ENCODE measurements at regions of chr5 and their contacts with region 1.

Region 1: DNA sequence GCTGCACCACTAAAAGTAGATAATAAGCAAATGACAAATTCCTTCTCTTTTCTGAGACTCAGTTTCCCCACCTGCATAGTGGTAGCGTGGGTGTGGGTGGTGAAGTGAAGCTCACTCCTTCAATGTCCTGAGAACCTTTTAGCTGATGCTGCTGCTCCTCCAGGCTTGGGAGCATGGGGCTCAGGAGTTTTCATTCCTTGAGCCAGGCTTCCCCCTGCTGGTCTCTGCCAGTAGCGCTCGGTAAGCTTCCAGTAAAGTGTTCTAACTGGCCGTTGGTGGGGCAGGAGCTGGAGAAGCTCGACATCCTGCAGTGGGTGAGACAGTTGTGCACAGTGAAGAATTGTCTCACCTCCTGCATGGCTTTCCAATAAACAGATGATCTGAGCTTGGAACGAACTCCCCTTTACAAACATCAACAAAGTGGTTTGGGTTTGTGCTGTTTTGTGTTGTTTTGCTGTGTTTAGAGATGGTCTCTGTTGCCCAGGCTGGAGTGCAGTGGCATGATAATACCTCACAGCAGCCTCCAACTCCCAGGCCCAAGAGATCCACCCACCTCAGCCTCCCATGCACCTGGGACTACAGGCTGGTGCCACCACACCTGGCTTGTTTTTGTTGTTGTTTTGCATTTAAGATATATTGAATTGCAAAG is 34.6 kb downstream of the SPARC start:
- DNase-seq: peak; percentile 81
- ATAC-seq: peak; percentile 99
- H3K4me3 Mint-ChIP-seq: no peak overlapping the region
- H3K27ac Mint-ChIP-seq: no peak overlapping the region
- H3K4me1 Mint-ChIP-seq: no peaks in the 10 kb centered on the region
- H3K27me3 Mint-ChIP-seq: no peaks in the 10 kb centered on the region
- CTCF ChIP-seq: peak; percentile 66

Region 2: DNA sequence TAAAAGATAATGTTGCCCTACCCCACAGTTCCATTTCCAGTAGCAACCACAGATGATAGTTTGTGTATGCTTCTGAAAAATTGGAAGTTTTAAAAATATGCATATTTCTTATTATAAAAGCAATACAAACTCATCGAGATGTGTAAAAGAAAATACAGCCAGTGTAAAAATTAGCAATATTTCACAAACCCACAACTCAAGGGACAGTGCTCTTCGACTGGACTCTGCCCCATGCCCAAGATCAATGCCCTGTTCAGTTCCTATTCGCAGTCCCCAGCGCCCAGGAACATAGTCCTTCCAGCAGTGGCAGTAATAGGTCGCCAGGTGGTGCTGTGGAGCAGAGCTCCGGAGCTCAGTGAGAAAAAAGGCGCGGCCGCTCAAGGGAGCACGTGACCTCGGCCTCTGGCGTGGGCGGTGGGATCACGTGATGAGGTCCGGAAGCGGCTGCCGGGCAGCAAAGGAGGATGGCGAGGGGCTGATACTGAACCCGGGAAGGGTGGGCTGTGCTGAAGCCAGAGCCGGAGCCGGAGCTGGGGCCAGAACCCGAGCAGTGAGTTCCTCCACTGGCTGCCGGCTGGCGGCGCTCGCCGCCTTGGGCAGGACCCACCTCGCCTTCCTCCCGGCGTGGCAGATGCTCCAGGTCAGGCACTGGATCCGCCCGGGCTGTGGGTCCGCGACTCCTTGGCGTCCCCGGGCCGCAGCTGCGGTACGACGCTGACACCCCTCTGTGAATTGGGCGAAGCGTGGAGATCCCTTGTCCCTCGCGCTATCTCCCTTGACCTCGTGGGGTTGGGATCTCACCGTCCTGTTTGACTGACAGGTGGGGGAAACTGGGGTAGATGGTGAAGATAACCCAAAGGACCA is 204.7 kb before region 1 on chr5 and contains the start of gene SLC36A1:
- CTCF ChIA-PET with region 1: interaction called, 34 read pairs
- POLR2A ChIA-PET with region 1: interaction called, 3 read pairs
- intact Hi-C with region 1: loop called (anchors 5 kb)
- DNase-seq: peak; percentile 98
- ATAC-seq: peak; percentile 98
- H3K4me3 Mint-ChIP-seq: peak within 1 kb of the TSS; percentile 93
- H3K27ac Mint-ChIP-seq: peak within 1 kb of the TSS; percentile 87
- H3K4me1 Mint-ChIP-seq: peaks cover 26% of the 10 kb centered on the region
- H3K27me3 Mint-ChIP-seq: peaks cover 10% of the 10 kb centered on the region
- CTCF ChIP-seq: peak; percentile 90
- total RNA-seq, gene SLC36A1: 3.5 to 3.7 TPM

Region 3: DNA sequence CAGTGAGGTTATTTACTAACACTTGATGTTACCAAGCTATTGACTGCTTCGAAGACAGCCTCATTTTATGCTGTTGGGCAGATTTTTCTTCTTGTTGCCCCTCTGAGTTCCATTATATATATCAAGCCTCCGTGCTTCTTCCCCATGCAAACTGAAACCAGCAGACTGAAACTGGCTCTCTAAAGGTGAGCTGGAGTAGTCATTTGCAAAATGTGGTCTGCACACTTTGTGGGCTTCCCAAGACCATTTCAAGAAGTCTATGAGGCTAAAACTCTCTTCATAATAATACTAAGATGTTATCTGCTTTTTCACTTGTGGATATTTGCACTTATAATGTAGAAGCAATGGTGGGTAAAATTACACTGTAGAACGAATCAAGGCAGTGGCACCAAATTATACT is 190.8 kb before region 1 on chr5:
- CTCF ChIA-PET with region 1: interaction called, 11 read pairs
- POLR2A ChIA-PET with region 1: no interaction called
- intact Hi-C with region 1: no loop called
- DNase-seq: no peak
- ATAC-seq: no peak
- H3K4me3 Mint-ChIP-seq: no peak overlapping the region
- H3K27ac Mint-ChIP-seq: no peak overlapping the region
- H3K4me1 Mint-ChIP-seq: no peaks in the 10 kb centered on the region
- H3K27me3 Mint-ChIP-seq: no peaks in the 10 kb centered on the region
- CTCF ChIP-seq: no peak

Region 4: DNA sequence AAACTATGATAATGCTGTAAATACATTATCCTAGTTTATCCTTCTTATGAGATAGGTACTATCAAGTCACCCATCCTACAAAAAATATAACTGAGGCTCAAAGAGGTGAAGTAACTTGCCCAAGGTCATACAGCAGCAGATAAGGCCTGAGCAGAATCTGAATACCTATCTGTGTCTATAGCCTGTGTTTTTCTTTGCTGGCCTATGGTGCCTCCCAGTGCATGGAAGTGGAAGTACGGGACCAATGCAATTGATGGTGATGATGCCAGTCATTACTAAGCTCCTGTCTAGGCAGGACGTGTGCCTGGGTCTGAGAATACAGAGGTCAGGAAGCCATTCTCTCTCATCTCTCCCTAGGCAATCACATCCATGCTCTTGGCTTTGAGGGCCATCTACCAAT is 128.8 kb before region 1 on chr5:
- CTCF ChIA-PET with region 1: interaction called, 17 read pairs
- POLR2A ChIA-PET with region 1: no interaction called
- intact Hi-C with region 1: loop called (anchors 10 kb)
- DNase-seq: peak; percentile 64
- ATAC-seq: peak; percentile 96
- H3K4me3 Mint-ChIP-seq: no peak overlapping the region
- H3K27ac Mint-ChIP-seq: no peak overlapping the region
- H3K4me1 Mint-ChIP-seq: no peaks in the 10 kb centered on the region
- H3K27me3 Mint-ChIP-seq: no peaks in the 10 kb centered on the region
- CTCF ChIP-seq: peak; percentile 62

Region 5: GRCh38 chr5:151637676-151638075 is 14.4 kb before region 1 on chr5:
- CTCF ChIA-PET with region 1: interaction called, 14 read pairs
- POLR2A ChIA-PET with region 1: no interaction called
- intact Hi-C with region 1: no loop called
- DNase-seq: no peak
- ATAC-seq: no peak
- H3K4me3 Mint-ChIP-seq: no peak overlapping the region
- H3K27ac Mint-ChIP-seq: no peak overlapping the region
- H3K4me1 Mint-ChIP-seq: peaks cover 2% of the 10 kb centered on the region
- H3K27me3 Mint-ChIP-seq: peaks cover 2% of the 10 kb centered on the region
- CTCF ChIP-seq: no peak

Region 6: DNA sequence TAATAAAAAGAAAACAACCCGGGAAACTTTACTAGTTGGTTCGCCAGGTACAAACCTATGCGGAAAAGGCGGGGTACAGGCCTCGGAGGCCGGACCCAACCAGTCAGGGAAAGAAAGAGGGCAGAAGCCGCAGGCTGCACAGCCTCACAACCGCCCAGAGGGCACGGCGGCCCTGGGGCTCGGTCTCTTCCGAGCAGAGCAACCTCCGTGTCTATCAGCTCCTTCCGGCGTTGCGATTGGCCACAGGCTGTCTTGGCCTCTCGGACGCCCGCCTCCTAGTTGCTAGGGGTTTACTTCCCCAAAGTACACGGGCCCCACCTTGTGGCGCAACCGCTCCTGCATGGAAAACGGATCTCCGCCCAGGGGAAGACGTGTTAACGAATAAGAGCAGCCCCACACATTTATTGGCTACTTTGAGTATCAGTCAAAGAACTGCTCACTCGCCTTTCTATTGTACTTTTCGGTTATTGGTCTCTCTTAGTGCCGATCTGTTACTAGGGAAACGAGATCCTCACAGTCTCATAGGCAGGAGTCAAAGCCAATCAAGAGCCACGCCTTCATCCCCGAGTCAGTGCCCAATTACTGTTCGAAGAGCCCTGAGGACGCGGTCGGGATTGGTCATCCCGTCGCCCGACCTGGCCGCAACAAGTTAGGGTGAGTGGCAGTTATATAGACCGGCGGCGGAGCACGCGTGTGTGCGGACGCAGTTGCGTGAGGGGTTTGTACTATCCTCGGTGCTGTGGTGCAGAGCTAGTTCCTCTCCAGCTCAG is 119.3 kb after region 1 on chr5 and contains the start of gene G3BP1:
- CTCF ChIA-PET with region 1: interaction called, 10 read pairs
- POLR2A ChIA-PET with region 1: no interaction called
- intact Hi-C with region 1: no loop called
- DNase-seq: peak; percentile 100
- ATAC-seq: peak; percentile 84
- H3K4me3 Mint-ChIP-seq: peak within 1 kb of the TSS; percentile 87
- H3K27ac Mint-ChIP-seq: peak within 1 kb of the TSS; percentile 84
- H3K4me1 Mint-ChIP-seq: peaks cover 31% of the 10 kb centered on the region
- H3K27me3 Mint-ChIP-seq: no peaks in the 10 kb centered on the region
- CTCF ChIP-seq: peak; percentile 25
- total RNA-seq, gene G3BP1: 247 to 253 TPM